ENCODE measurements at regions of chr1 and their contacts with region 1.

Region 1: DNA sequence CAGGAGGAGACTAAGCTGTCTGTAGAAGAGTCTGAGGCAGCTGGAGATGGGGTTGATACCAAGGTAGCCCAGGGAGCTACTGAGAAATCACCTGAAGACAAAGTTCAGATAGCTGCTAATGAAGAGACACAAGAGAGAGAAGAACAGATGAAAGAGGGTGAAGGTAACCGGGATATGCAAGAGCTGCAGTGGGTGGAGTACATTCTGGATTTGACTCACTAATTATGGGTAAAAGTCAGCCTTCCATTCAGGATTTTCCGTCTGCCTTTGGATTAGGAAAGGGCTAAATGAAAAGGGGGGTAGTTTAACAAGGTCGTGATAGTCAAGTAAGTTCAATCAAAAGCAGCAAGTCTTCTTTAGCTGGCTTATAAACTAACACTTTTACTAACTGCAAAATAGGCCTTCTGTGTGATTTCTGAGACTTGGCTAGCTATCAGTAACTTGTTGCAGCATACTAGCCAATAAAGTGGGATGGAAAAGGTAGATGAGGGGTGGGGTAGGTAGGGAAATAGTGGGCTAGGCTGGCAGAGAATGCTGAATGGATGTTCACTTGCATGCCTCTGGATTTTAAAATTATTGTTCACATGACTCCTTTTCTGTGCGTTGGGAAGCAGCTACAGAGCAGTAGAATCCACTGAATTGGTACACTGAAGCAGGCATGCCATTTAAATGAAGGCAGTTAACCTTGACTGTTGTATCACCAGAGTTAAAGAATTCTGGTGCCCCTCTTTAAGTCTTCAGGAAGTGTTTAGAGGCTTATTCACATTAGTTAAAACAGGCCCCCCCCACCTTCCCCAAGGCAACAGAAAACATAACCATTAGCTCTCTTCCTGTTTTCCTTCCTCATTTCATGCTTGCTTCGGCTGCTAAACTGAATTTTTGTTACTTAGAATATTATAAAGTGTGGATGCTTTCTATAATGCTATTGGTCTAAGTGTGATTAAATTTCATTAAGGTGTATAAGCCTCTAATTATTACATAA is 15.4 kb downstream of the CCDC17 start:
- DNase-seq: no peak
- H3K4me3 ChIP-seq: no peak overlapping the region
- H3K27ac ChIP-seq: no peak overlapping the region
- H3K4me1 ChIP-seq: no peaks in the 10 kb centered on the region
- H3K27me3 ChIP-seq: no peaks in the 10 kb centered on the region
- CTCF ChIP-seq: no peak
- EP300 ChIP-seq: no peak
- POLR2A ChIP-seq: no peak; a peak in 1 of 3 replicates
- RAD21 ChIP-seq: no peak

Region 2: GRCh38 chr1:45589861-45590260 is 18.6 kb before region 1 on chr1:
- CTCF ChIA-PET with region 1: interaction called, 3 read pairs
- POLR2A ChIA-PET with region 1: interaction called, 90 read pairs
- DNase-seq: no peak
- H3K4me3 ChIP-seq: no peak overlapping the region
- H3K27ac ChIP-seq: no peak overlapping the region
- H3K4me1 ChIP-seq: peaks cover 0 to 12% (median 1%) of the 10 kb centered on the region in 4 experiments; a peak in 4 of 7 replicates
- H3K27me3 ChIP-seq: no peaks in the 10 kb centered on the region
- CTCF ChIP-seq: no peak
- EP300 ChIP-seq: no peak
- POLR2A ChIP-seq: no peak
- RAD21 ChIP-seq: no peak

Region 3: GRCh38 chr1:45621501-45621836 is 13.0 kb after region 1 on chr1:
- CTCF ChIA-PET with region 1: interaction called, 3 read pairs
- POLR2A ChIA-PET with region 1: interaction called, 42 read pairs
- DNase-seq: no peak
- H3K4me3 ChIP-seq: no peak overlapping the region
- H3K27ac ChIP-seq: no peak overlapping the region
- H3K4me1 ChIP-seq: no peaks in the 10 kb centered on the region; a peak in 1 of 7 replicates
- H3K27me3 ChIP-seq: no peaks in the 10 kb centered on the region
- CTCF ChIP-seq: no peak
- EP300 ChIP-seq: no peak
- POLR2A ChIP-seq: peak in 1 of 2 experiments; percentile 3; a peak in 1 of 3 replicates
- RAD21 ChIP-seq: no peak